Dorsolateral prefrontal cortex (tissue), 120 donors: ENCODE measurements at regions of chrX and their contacts with region 1.

Region 1: GRCh38 chrX:30627818-30628652 is 25.2 kb upstream of the GK start:
- DNase-seq: no peak
- H3K4me3 ChIP-seq: no peak overlapping the region
- H3K27ac ChIP-seq: peak overlapping the region in 19 of 59 donors; percentile 2 to 69 (median 27)
- H3K27me3 ChIP-seq: peaks cover 0 to 14% (median 0%) of the 10 kb centered on the region in 45 donors
- CTCF ChIP-seq: no peak

Region 2: DNA sequence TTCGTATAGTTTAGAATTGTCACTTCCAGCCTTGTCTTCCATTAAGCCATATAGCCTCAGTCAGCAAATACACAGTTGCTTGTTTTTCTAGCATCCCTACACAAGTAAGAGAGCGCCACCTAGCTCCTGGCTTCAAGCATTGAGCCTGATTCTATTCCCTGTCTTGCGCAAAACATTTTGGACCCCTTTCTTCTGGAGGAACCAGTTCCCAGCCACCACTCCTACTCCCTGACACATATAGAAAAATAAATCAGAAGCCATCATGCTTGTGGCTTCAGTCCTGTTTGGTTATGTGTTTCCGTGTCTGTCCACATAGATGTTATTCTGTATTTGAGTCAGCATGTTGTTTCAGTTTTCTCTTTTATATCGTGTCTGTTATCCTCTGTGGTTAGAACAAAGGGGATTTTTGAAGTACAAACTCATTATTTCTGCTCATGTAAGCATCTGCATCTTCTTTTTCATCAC is 85.1 kb after region 1 on chrX:
- intact Hi-C with region 1: loop called in 1 of 2 experiments (anchors 5 kb)
- DNase-seq: peak in 4 of 10 donors; percentile 14 to 48 (median 43)
- H3K4me3 ChIP-seq: no peak overlapping the region
- H3K27ac ChIP-seq: no peak overlapping the region
- H3K27me3 ChIP-seq: peaks cover 0 to 55% (median 12%) of the 10 kb centered on the region in 45 donors
- CTCF ChIP-seq: peak in 53 of 56 donors; percentile 21 to 78 (median 52)